ENCODE measurements at regions of chr10 and their contacts with region 1.

Region 1: GRCh38 chr10:103481974-103482531 is 3.0 kb upstream of the CALHM3 start:
- DNase-seq: peak; percentile 42
- H3K4me3 ChIP-seq: no peak overlapping the region
- H3K27ac ChIP-seq: no peak overlapping the region
- H3K27me3 ChIP-seq: peaks cover 3% of the 10 kb centered on the region
- CTCF ChIP-seq: peak; percentile 79

Region 2: DNA sequence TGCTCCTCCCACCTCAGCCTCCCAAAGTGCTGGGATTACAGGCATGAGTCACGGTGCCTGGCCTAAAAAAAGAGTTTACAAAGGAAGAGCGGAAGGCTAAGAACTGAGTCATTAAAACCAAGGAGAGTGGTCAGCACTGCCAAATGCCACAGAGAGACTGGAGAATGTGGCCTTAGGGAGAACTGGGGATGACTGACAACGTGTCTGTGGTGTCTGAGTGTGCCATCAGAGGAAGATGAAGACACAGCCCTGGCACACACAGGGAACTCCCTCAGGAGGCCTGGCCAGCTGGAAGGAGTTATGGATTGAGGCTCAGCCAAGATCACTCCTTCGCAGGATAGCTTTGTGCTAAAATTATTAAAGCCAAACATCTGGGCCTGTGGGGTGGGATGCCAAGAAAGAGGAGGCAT is 209.0 kb before region 1 on chr10:
- CTCF ChIA-PET with region 1: no interaction called
- POLR2A ChIA-PET with region 1: no interaction called
- DNase-seq: peak; percentile 76
- H3K4me3 ChIP-seq: no peak overlapping the region
- H3K27ac ChIP-seq: peak overlapping the region; percentile 73
- H3K27me3 ChIP-seq: peaks cover 16% of the 10 kb centered on the region
- CTCF ChIP-seq: no peak

Region 3: DNA sequence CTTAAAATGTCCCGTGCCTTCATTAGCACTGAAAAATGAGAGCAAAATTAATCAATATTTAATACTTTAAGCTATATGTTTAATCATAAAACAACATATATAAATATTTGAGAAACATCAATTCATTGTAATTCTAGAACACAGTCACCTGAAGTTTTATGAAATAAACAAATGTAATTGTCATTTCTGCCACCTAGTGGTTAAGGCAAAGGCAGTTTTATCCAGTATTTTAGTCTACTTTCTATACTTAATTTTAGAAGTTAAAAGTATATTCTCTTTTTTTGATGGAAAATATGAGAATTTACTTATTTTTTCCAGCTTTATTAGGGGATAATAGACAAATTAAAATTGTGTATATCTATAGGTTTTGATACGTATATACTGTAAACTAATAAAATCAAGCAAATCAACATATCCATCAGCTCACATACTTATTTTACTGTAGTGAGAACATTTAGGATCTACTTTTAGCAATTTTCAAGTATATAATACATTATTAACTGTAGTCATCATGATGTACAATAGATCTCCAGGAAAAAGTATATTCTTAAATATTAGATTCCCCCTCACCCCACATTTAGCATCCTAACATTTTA is 148.0 kb before region 1 on chr10:
- CTCF ChIA-PET with region 1: interaction called, 17 read pairs
- POLR2A ChIA-PET with region 1: no interaction called
- DNase-seq: no peak
- H3K4me3 ChIP-seq: no peak overlapping the region
- H3K27ac ChIP-seq: no peak overlapping the region
- H3K27me3 ChIP-seq: no peaks in the 10 kb centered on the region
- CTCF ChIP-seq: peak; percentile 65

Region 4: GRCh38 chr10:103416436-103417147 is 65.5 kb before region 1 on chr10:
- CTCF ChIA-PET with region 1: interaction called, 112 read pairs
- POLR2A ChIA-PET with region 1: no interaction called
- DNase-seq: peak; percentile 21
- H3K4me3 ChIP-seq: no peak overlapping the region
- H3K27ac ChIP-seq: no peak overlapping the region
- H3K27me3 ChIP-seq: no peaks in the 10 kb centered on the region
- CTCF ChIP-seq: peak; percentile 62

Region 5: DNA sequence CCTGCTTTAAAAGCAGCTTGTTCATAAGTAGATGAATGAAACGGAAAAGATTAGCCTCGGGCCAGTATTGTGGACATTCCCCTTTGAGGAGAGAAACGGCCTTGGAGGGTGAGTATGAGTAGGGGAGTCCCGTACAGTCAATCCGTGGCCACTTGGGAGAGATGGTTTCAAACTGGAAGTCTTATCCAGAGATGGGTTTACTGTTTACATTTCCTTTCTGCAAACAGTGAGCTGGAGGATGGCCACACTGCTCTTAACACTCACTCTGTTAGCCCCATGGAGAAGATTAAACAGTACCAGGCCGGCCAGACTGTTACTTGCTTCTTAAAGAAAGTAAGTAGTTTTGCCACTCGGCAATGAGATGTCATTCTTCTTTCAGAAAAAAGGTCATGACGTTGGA is 50.2 kb before region 1 on chr10:
- CTCF ChIA-PET with region 1: interaction called, 13 read pairs
- POLR2A ChIA-PET with region 1: no interaction called
- DNase-seq: no peak
- H3K4me3 ChIP-seq: no peak overlapping the region
- H3K27ac ChIP-seq: no peak overlapping the region
- H3K27me3 ChIP-seq: no peaks in the 10 kb centered on the region
- CTCF ChIP-seq: no peak

Region 6: GRCh38 chr10:103512196-103512990 is 30.3 kb after region 1 on chr10:
- CTCF ChIA-PET with region 1: no interaction called
- POLR2A ChIA-PET with region 1: no interaction called
- DNase-seq: no peak
- H3K4me3 ChIP-seq: no peak overlapping the region
- H3K27ac ChIP-seq: no peak overlapping the region
- H3K27me3 ChIP-seq: peaks cover 60% of the 10 kb centered on the region
- CTCF ChIP-seq: no peak